ENCODE measurements at regions of chr6 and their contacts with region 1.

Region 1: DNA sequence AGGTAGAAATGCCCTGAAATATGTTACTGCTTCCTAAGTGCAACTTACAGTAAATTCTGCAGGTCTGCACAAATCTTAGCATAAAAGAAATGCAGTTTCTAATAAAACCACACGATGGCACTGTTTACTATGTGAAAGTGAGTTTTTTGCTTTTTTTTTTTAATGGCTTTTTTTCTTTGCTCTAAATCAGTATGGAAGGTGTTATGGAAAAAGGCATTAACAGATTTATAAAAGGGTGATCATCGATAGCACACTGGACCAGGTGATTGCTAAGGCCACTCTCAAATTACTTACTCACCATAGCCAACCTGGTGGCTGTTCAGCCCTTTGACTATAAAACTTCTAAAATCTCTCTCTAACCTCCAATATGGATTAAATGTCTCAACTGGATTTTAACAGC is 45.8 kb downstream of the AHI1 start:
- DNase-seq: no peak
- ATAC-seq: peak; percentile 45
- H3K4me3 Mint-ChIP-seq: no peak overlapping the region
- H3K27ac Mint-ChIP-seq: no peak overlapping the region
- H3K4me1 Mint-ChIP-seq: peaks cover 8% of the 10 kb centered on the region
- H3K27me3 Mint-ChIP-seq: no peaks in the 10 kb centered on the region
- CTCF ChIP-seq: peak; percentile 54

Region 2: GRCh38 chr6:135535989-135536414 is 84.3 kb after region 1 on chr6:
- CTCF ChIA-PET with region 1: interaction called, 3 read pairs
- POLR2A ChIA-PET with region 1: no interaction called
- intact Hi-C with region 1: loop called (anchors 1 kb)
- DNase-seq: no peak
- ATAC-seq: no peak
- H3K4me3 Mint-ChIP-seq: no peak overlapping the region
- H3K27ac Mint-ChIP-seq: no peak overlapping the region
- H3K4me1 Mint-ChIP-seq: peaks cover 2% of the 10 kb centered on the region
- H3K27me3 Mint-ChIP-seq: peaks cover 13% of the 10 kb centered on the region
- CTCF ChIP-seq: no peak

Region 3: GRCh38 chr6:135675862-135676261 is 224.2 kb after region 1 on chr6:
- CTCF ChIA-PET with region 1: interaction called, 3 read pairs
- POLR2A ChIA-PET with region 1: no interaction called
- intact Hi-C with region 1: loop called (anchors 1 kb)
- DNase-seq: no peak
- ATAC-seq: peak; percentile 70
- H3K4me3 Mint-ChIP-seq: no peak overlapping the region
- H3K27ac Mint-ChIP-seq: no peak overlapping the region
- H3K4me1 Mint-ChIP-seq: no peaks in the 10 kb centered on the region
- H3K27me3 Mint-ChIP-seq: no peaks in the 10 kb centered on the region
- CTCF ChIP-seq: peak; percentile 43

Region 4: GRCh38 chr6:136550330-136551071 is 1098.8 kb after region 1 on chr6 and contains the start of gene MAP7:
- CTCF ChIA-PET with region 1: no interaction called
- POLR2A ChIA-PET with region 1: no interaction called
- intact Hi-C with region 1: loop called (anchors 10 kb)
- DNase-seq: peak; percentile 63
- ATAC-seq: peak; percentile 81
- H3K4me3 Mint-ChIP-seq: peak within 1 kb of the TSS; percentile 71
- H3K27ac Mint-ChIP-seq: no peak within 1 kb of the TSS
- H3K4me1 Mint-ChIP-seq: peaks cover 9% of the 10 kb centered on the region
- H3K27me3 Mint-ChIP-seq: peaks cover 32% of the 10 kb centered on the region
- CTCF ChIP-seq: peak; percentile 78
- total RNA-seq, gene MAP7: 0.35 and 0.56 TPM in 2 replicates

Measured in activated B cell treated with CpG ODN at 0.5 μM for 24 hours (primary cell).